Activated CD4-positive, alpha-beta T cell treated with anti-CD3 and anti-CD28 coated beads for 36 hours (primary cell): ENCODE measurements at regions of chr7 and their contacts with region 1.

Region 1: DNA sequence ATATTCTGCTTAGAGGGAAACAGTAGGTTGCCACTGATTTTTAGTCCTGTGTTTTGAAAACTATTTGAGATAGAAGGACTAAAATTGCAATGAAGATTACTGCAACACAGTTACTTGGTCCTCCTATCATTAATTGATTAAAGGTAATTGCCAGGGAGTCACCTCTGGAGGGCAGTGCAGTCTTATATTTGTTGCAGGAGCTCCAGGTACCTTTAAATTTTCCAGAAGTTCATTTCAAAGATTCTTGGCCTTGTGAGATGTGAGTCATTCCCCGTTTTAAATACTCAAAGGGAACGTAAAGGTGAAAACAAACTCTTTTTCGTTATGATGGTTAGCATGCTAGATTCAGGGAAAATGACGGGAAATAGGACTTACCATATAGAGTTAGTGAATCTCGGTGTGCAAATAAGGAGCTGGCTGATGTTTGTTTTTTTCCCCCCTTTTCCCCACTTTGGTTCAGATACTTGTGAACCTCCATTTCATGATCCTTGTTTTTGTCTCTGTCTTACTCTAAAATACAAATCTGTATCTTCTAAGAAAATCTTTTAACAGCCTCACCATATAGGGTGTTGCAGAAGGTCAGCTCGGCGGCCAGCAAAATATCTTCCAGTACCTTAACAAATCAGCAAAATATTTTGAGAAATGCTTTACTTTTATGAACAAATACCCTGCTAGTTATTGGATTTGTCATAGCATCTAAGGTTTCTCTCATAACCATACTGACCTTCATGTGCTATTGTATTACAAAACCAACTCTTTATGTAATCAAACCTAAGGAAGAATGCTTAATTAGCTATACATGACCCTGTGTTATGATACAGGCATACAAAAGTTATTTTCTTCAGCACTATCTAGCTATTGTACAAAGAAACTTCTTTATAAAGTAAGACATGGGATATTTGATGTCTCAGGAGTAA is 143.0 kb upstream of the HDAC9 start:
- DNase-seq: peak; percentile 51
- ATAC-seq: no peak
- H3K4me3 Mint-ChIP-seq: no peak overlapping the region
- H3K27ac Mint-ChIP-seq: no peak overlapping the region
- H3K4me1 Mint-ChIP-seq: no peaks in the 10 kb centered on the region
- H3K27me3 Mint-ChIP-seq: no peaks in the 10 kb centered on the region

Region 2: GRCh38 chr7:17769918-17770317 is 582.7 kb before region 1 on chr7:
- CTCF ChIA-PET with region 1: interaction called, 11 read pairs
- POLR2A ChIA-PET with region 1: no interaction called
- intact Hi-C with region 1: no loop called
- DNase-seq: peak; percentile 75
- ATAC-seq: peak; percentile 64
- H3K4me3 Mint-ChIP-seq: no peak overlapping the region
- H3K27ac Mint-ChIP-seq: no peak overlapping the region
- H3K4me1 Mint-ChIP-seq: peaks cover 3% of the 10 kb centered on the region
- H3K27me3 Mint-ChIP-seq: no peaks in the 10 kb centered on the region

Region 3: GRCh38 chr7:18337048-18337809 is 15.4 kb before region 1 on chr7:
- CTCF ChIA-PET with region 1: interaction called, 11 read pairs
- POLR2A ChIA-PET with region 1: interaction called, 4 read pairs
- intact Hi-C with region 1: no loop called
- DNase-seq: no peak
- ATAC-seq: no peak
- H3K4me3 Mint-ChIP-seq: no peak overlapping the region
- H3K27ac Mint-ChIP-seq: no peak overlapping the region
- H3K4me1 Mint-ChIP-seq: no peaks in the 10 kb centered on the region
- H3K27me3 Mint-ChIP-seq: peaks cover 3% of the 10 kb centered on the region

Region 4: GRCh38 chr7:18570890-18571478 is 218.4 kb after region 1 on chr7:
- CTCF ChIA-PET with region 1: interaction called, 4 read pairs
- POLR2A ChIA-PET with region 1: no interaction called
- intact Hi-C with region 1: loop called (anchors 5 to 10 kb)
- DNase-seq: no peak
- ATAC-seq: no peak
- H3K4me3 Mint-ChIP-seq: no peak overlapping the region
- H3K27ac Mint-ChIP-seq: no peak overlapping the region
- H3K4me1 Mint-ChIP-seq: no peaks in the 10 kb centered on the region
- H3K27me3 Mint-ChIP-seq: no peaks in the 10 kb centered on the region

Region 5: GRCh38 chr7:18623389-18623788 is 270.8 kb after region 1 on chr7:
- CTCF ChIA-PET with region 1: no interaction called
- POLR2A ChIA-PET with region 1: no interaction called
- intact Hi-C with region 1: no loop called
- DNase-seq: no peak
- ATAC-seq: peak; percentile 36
- H3K4me3 Mint-ChIP-seq: no peak overlapping the region
- H3K27ac Mint-ChIP-seq: no peak overlapping the region
- H3K4me1 Mint-ChIP-seq: no peaks in the 10 kb centered on the region
- H3K27me3 Mint-ChIP-seq: no peaks in the 10 kb centered on the region

Region 6: DNA sequence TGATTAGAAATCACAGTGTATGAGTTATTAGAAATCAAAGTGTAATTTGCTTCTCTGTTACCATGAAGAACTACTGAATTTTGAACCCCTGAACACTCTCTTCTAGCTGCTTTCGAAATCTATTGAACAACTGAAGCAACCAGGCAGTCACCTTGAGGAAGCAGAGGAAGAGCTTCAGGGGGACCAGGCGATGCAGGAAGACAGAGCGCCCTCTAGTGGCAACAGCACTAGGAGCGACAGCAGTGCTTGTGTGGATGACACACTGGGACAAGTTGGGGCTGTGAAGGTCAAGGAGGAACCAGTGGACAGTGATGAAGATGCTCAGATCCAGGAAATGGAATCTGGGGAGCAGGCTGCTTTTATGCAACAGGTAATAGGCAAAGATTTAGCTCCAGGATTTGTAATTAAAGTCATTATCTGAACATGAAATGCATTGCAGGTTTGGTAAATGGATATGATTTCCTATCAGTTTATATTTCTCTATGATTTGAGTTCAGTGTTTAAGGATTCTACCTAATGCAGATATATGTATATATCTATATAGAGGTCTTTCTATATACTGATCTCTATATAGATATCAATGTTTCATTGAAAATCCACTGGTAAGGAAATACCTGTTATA is 313.6 kb after region 1 on chr7:
- CTCF ChIA-PET with region 1: interaction called, 12 read pairs
- POLR2A ChIA-PET with region 1: interaction called, 5 read pairs
- intact Hi-C with region 1: loop called (anchors 1 to 2 kb)
- DNase-seq: peak; percentile 85
- ATAC-seq: peak; percentile 82
- H3K4me3 Mint-ChIP-seq: no peak overlapping the region
- H3K27ac Mint-ChIP-seq: no peak overlapping the region
- H3K4me1 Mint-ChIP-seq: no peaks in the 10 kb centered on the region
- H3K27me3 Mint-ChIP-seq: peaks cover 3% of the 10 kb centered on the region

Region 7: GRCh38 chr7:18753972-18754610 is 401.5 kb after region 1 on chr7:
- CTCF ChIA-PET with region 1: no interaction called
- POLR2A ChIA-PET with region 1: no interaction called
- intact Hi-C with region 1: no loop called
- DNase-seq: no peak
- ATAC-seq: no peak
- H3K4me3 Mint-ChIP-seq: no peak overlapping the region
- H3K27ac Mint-ChIP-seq: no peak overlapping the region
- H3K4me1 Mint-ChIP-seq: no peaks in the 10 kb centered on the region
- H3K27me3 Mint-ChIP-seq: no peaks in the 10 kb centered on the region

Region 8: GRCh38 chr7:19051767-19052375 is 699.3 kb after region 1 on chr7:
- CTCF ChIA-PET with region 1: interaction called, 3 read pairs
- POLR2A ChIA-PET with region 1: no interaction called
- intact Hi-C with region 1: loop called (anchors 5 to 10 kb)
- DNase-seq: peak; percentile 54
- ATAC-seq: no peak
- H3K4me3 Mint-ChIP-seq: no peak overlapping the region
- H3K27ac Mint-ChIP-seq: no peak overlapping the region
- H3K4me1 Mint-ChIP-seq: no peaks in the 10 kb centered on the region
- H3K27me3 Mint-ChIP-seq: no peaks in the 10 kb centered on the region

Region 9: GRCh38 chr7:19665399-19666008 is 1312.9 kb after region 1 on chr7:
- CTCF ChIA-PET with region 1: interaction called, 9 read pairs
- POLR2A ChIA-PET with region 1: no interaction called
- intact Hi-C with region 1: loop called (anchors 2 to 10 kb)
- DNase-seq: no peak
- ATAC-seq: no peak
- H3K4me3 Mint-ChIP-seq: no peak overlapping the region
- H3K27ac Mint-ChIP-seq: no peak overlapping the region
- H3K4me1 Mint-ChIP-seq: peaks cover 6% of the 10 kb centered on the region
- H3K27me3 Mint-ChIP-seq: peaks cover 4% of the 10 kb centered on the region